K562 (cell line): ENCODE measurements at regions of chr19 and their contacts with region 1.

Region 1: GRCh38 chr19:39445265-39446111 is at the start of gene SUPT5H:
- DNase-seq: peak; percentile 95 to 99 (median 96)
- ATAC-seq: peak; percentile 99
- H3K4me3 ChIP-seq: peak within 1 kb of the TSS; percentile 71
- H3K27ac ChIP-seq: peak within 1 kb of the TSS; percentile 72
- H3K4me1 ChIP-seq: peaks cover 2 to 22% of the 10 kb centered on the region in 2 experiments; a peak in 3 of 5 replicates
- H3K27me3 ChIP-seq: no peaks in the 10 kb centered on the region
- CTCF ChIP-seq: peak in 1 of 3 experiments; percentile 28; a peak in 1 of 6 replicates
- EP300 ChIP-seq: peak; percentile 41; the same call in 1 of the 2 replicates
- POLR2A ChIP-seq: peak; percentile 88
- RAD21 ChIP-seq: no peak
- polyA plus RNA-seq, gene SUPT5H: 13.3 to 18.8 TPM

Region 2: GRCh38 chr19:39125554-39126311 is 319.8 kb before region 1 on chr19 and contains the start of gene PAK4:
- CTCF ChIA-PET with region 1: no interaction called
- POLR2A ChIA-PET with region 1: no interaction called
- in situ Hi-C with region 1: no loop called
- intact Hi-C with region 1: no loop called
- DNase-seq: peak; percentile 98 to 100 (median 100)
- ATAC-seq: peak; percentile 99
- H3K4me3 ChIP-seq: peak within 1 kb of the TSS; percentile 79
- H3K27ac ChIP-seq: peak within 1 kb of the TSS; percentile 76
- H3K4me1 ChIP-seq: peaks cover 3 to 30% of the 10 kb centered on the region in 2 experiments; a peak in 3 of 5 replicates
- H3K27me3 ChIP-seq: no peaks in the 10 kb centered on the region
- CTCF ChIP-seq: no peak
- EP300 ChIP-seq: no peak
- POLR2A ChIP-seq: peak; percentile 89
- RAD21 ChIP-seq: no peak
- polyA plus RNA-seq, gene PAK4: 0.21 to 0.46 TPM

Region 3: DNA sequence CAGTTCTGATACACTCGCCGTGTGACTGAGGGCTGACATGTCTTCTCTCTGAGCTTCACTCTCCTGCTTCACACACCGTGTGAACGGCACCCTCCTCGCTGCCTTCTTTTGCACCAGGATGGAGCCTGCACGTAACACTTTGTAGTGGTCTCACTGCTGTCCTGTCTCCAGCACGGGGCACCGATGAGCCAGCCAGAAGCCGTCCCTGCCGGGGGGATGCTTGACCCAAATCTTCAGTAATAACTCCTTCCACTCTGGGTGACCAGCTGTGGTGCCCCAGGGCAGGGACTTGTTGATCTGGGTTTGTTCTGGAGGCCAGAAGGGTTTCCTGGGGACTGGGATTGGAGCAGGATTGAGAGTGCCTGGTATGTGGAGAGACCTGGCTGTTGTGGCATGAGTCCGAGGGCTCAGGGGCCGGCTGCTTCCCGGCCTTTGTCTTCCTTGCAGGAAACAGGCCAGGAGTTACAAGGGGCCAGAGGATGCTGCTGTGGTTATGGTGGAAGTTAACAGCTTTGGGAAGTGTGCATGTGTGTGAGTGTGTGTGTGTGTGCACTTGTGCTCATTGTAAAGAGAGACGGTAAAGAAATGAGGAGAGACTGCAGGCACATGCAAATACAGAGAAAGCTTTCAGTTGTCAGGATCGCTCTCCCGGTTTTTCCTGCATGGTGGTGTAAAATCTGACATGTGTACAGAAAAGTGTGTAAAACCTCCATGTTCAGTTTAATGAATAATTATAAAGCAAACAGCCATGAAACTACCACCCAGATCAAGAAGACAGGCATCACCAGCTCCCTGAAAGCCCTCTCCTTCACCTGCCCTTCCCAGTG is 301.0 kb before region 1 on chr19:
- CTCF ChIA-PET with region 1: no interaction called
- POLR2A ChIA-PET with region 1: no interaction called
- in situ Hi-C with region 1: no loop called
- intact Hi-C with region 1: no loop called
- DNase-seq: no peak
- ATAC-seq: no peak
- H3K4me3 ChIP-seq: no peak overlapping the region
- H3K27ac ChIP-seq: no peak overlapping the region
- H3K4me1 ChIP-seq: peaks cover 15 to 40% of the 10 kb centered on the region in 2 experiments
- H3K27me3 ChIP-seq: no peaks in the 10 kb centered on the region
- CTCF ChIP-seq: no peak
- EP300 ChIP-seq: no peak
- POLR2A ChIP-seq: no peak
- RAD21 ChIP-seq: no peak

Region 4: DNA sequence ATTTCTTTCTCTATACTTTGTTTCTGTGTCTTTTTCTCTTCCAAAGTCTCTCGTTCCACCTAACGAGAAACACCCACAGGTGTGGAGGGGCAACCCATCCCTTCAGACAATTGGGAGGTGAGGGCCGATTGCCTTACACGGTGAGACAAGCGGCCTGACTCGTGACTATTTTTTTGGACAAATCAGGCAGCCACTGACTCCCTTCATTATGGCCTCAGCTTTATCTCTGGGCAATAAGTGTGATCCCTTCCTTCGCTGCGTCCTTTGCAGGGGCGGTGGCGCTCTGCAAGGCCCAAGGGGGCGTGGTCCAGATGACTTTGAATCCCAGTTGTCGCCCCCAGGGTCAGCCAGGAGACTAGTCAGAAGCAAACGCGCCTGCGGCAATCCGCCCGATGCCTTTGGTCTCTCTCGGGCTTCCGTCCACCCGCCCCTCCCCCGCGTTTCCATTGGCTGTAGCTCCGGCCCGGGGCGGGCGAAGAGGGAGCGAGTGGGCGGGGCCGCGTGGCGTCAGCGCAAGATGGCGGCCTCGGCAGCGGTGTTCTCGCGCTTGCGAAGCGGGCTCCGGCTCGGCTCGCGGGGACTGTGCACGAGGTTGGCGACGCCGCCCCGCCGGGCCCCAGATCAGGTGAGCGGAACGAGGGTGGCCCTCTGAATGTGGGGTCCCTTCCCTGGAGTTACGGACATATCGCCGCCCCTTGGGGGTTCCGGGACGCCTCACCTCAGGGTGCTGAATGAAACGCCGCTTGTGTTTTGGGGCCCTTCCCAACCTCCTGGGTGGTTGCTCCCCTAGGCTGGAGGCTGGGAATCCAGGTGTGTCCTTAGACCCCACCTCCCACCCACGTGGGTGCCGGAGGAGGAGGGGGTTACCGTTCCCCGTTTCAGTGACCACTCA is 35.1 kb after region 1 on chr19 and contains the start of gene TIMM50:
- CTCF ChIA-PET with region 1: no interaction called
- POLR2A ChIA-PET with region 1: interaction called, 8 read pairs
- in situ Hi-C with region 1: no loop called
- intact Hi-C with region 1: loop called (anchors 5 kb)
- DNase-seq: peak; percentile 91 to 100 (median 94)
- ATAC-seq: peak; percentile 96
- H3K4me3 ChIP-seq: peak within 1 kb of the TSS; percentile 94
- H3K27ac ChIP-seq: peak within 1 kb of the TSS; percentile 92
- H3K4me1 ChIP-seq: peaks cover 10 to 17% of the 10 kb centered on the region in 2 experiments; a peak in 4 of 5 replicates
- H3K27me3 ChIP-seq: no peaks in the 10 kb centered on the region
- CTCF ChIP-seq: peak; percentile 21 to 32 (median 30); a peak in 2 of 6 replicates
- EP300 ChIP-seq: peak; percentile 61
- POLR2A ChIP-seq: peak; percentile 88
- RAD21 ChIP-seq: no peak; a peak in 1 of 4 replicates
- polyA plus RNA-seq, gene TIMM50: 28.3 to 55.4 TPM

Region 5: GRCh38 chr19:39539519-39540332 is 94.2 kb after region 1 on chr19 and contains the start of gene EID2:
- CTCF ChIA-PET with region 1: no interaction called
- POLR2A ChIA-PET with region 1: no interaction called
- in situ Hi-C with region 1: loop called (anchors 5 kb)
- intact Hi-C with region 1: no loop called
- DNase-seq: peak; percentile 96 to 98 (median 96)
- ATAC-seq: peak; percentile 98
- H3K4me3 ChIP-seq: peak within 1 kb of the TSS; percentile 88
- H3K27ac ChIP-seq: peak within 1 kb of the TSS; percentile 81
- H3K4me1 ChIP-seq: peaks cover 3 to 8% of the 10 kb centered on the region in 2 experiments; a peak in 2 of 5 replicates
- H3K27me3 ChIP-seq: peaks cover 3 to 7% of the 10 kb centered on the region in 2 experiments; a peak in 2 of 5 replicates
- CTCF ChIP-seq: peak; percentile 81 to 91 (median 91)
- EP300 ChIP-seq: no peak
- POLR2A ChIP-seq: peak; percentile 83
- RAD21 ChIP-seq: peak; percentile 46 to 68
- polyA plus RNA-seq, gene EID2: 2.5 to 2.7 TPM

Region 6: GRCh38 chr19:39671738-39672363 is 226.4 kb after region 1 on chr19:
- CTCF ChIA-PET with region 1: no interaction called
- POLR2A ChIA-PET with region 1: no interaction called
- in situ Hi-C with region 1: no loop called
- intact Hi-C with region 1: no loop called
- DNase-seq: peak in 2 of 4 experiments; percentile 37 to 58
- ATAC-seq: peak; percentile 83
- H3K4me3 ChIP-seq: no peak overlapping the region
- H3K27ac ChIP-seq: no peak overlapping the region
- H3K4me1 ChIP-seq: no peaks in the 10 kb centered on the region
- H3K27me3 ChIP-seq: no peaks in the 10 kb centered on the region
- CTCF ChIP-seq: peak; percentile 57 to 71 (median 63); a peak in 4 of 6 replicates
- EP300 ChIP-seq: no peak
- POLR2A ChIP-seq: no peak
- RAD21 ChIP-seq: peak; percentile 85 to 87